H1 (cell line): ENCODE measurements at regions of chr11 and their contacts with region 1.

Region 1: GRCh38 chr11:6812390-6813005 is 13.0 kb upstream of the OR6A2 start:
- DNase-seq: no peak
- H3K4me3 ChIP-seq: no peak overlapping the region
- H3K27ac ChIP-seq: no peak overlapping the region
- H3K4me1 ChIP-seq: no peaks in the 10 kb centered on the region; a peak in 1 of 7 replicates
- H3K27me3 ChIP-seq: no peaks in the 10 kb centered on the region
- CTCF ChIP-seq: peak; percentile 11 to 92 (median 77)
- EP300 ChIP-seq: no peak
- POLR2A ChIP-seq: no peak
- RAD21 ChIP-seq: peak; percentile 70 to 79

Region 2: GRCh38 chr11:6674862-6675261 is 137.6 kb before region 1 on chr11:
- CTCF ChIA-PET with region 1: no interaction called
- POLR2A ChIA-PET with region 1: no interaction called
- DNase-seq: no peak
- H3K4me3 ChIP-seq: no peak overlapping the region
- H3K27ac ChIP-seq: no peak overlapping the region
- H3K4me1 ChIP-seq: no peaks in the 10 kb centered on the region
- H3K27me3 ChIP-seq: no peaks in the 10 kb centered on the region; a peak in 1 of 7 replicates
- CTCF ChIP-seq: no peak
- EP300 ChIP-seq: no peak
- POLR2A ChIP-seq: no peak
- RAD21 ChIP-seq: no peak

Region 3: GRCh38 chr11:6737872-6738466 is 74.5 kb before region 1 on chr11:
- CTCF ChIA-PET with region 1: interaction called, 12 read pairs
- POLR2A ChIA-PET with region 1: no interaction called
- DNase-seq: peak in 1 of 2 experiments; percentile 47
- H3K4me3 ChIP-seq: no peak overlapping the region
- H3K27ac ChIP-seq: no peak overlapping the region
- H3K4me1 ChIP-seq: no peaks in the 10 kb centered on the region
- H3K27me3 ChIP-seq: no peaks in the 10 kb centered on the region
- CTCF ChIP-seq: peak in 2 of 3 experiments; percentile 43 to 62; a peak in 2 of 4 replicates
- EP300 ChIP-seq: no peak
- POLR2A ChIP-seq: no peak
- RAD21 ChIP-seq: peak; percentile 48 to 56

Region 4: DNA sequence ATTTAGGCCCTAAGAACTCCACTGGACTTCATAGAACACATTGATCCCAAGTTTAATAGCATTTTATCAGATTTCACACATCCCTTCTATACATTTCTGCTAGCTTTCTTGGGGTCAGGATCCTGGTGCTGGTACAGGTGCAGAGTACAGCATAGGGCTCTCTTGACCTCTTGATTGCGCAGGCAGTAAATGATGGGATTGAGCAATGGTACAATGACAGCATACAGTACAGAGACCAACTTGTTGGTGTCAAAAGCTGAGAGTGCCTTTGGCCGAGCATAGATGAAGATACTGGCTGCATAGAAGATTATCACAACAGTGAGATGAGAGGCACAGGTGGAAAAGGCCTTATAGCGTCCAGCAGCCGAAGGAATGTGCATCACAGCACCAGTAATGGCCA is 17.9 kb before region 1 on chr11:
- CTCF ChIA-PET with region 1: interaction called, 22 read pairs
- POLR2A ChIA-PET with region 1: no interaction called
- DNase-seq: no peak
- H3K4me3 ChIP-seq: no peak overlapping the region
- H3K27ac ChIP-seq: no peak overlapping the region
- H3K4me1 ChIP-seq: no peaks in the 10 kb centered on the region
- H3K27me3 ChIP-seq: no peaks in the 10 kb centered on the region
- CTCF ChIP-seq: no peak
- EP300 ChIP-seq: no peak
- POLR2A ChIP-seq: no peak
- RAD21 ChIP-seq: no peak

Region 5: GRCh38 chr11:6833356-6833755 is 20.9 kb after region 1 on chr11:
- CTCF ChIA-PET with region 1: interaction called, 11 read pairs
- POLR2A ChIA-PET with region 1: no interaction called
- DNase-seq: no peak
- H3K4me3 ChIP-seq: no peak overlapping the region
- H3K27ac ChIP-seq: no peak overlapping the region
- H3K4me1 ChIP-seq: no peaks in the 10 kb centered on the region
- H3K27me3 ChIP-seq: no peaks in the 10 kb centered on the region
- CTCF ChIP-seq: no peak
- EP300 ChIP-seq: no peak
- POLR2A ChIP-seq: no peak
- RAD21 ChIP-seq: no peak

Region 6: GRCh38 chr11:7020183-7020917 is 207.9 kb after region 1 on chr11 and contains the starts of genes NLRP14 and ZNF214:
- CTCF ChIA-PET with region 1: interaction called, 10 read pairs
- POLR2A ChIA-PET with region 1: interaction called, 3 read pairs
- DNase-seq: peak; percentile 80 to 89
- H3K4me3 ChIP-seq: peak within 1 kb of the TSS; percentile 82 to 99 (median 94)
- H3K27ac ChIP-seq: peak within 1 kb of the TSS; percentile 48
- H3K4me1 ChIP-seq: peaks cover 0 to 3% (median 0%) of the 10 kb centered on the region in 4 experiments; a peak in 1 of 7 replicates
- H3K27me3 ChIP-seq: no peaks in the 10 kb centered on the region; a peak in 1 of 7 replicates
- CTCF ChIP-seq: no peak
- EP300 ChIP-seq: no peak
- POLR2A ChIP-seq: peak; percentile 6 to 37; a peak in 1 of 3 replicates
- RAD21 ChIP-seq: no peak
- total RNA-seq, gene NLRP14: 0.08 TPM in 1 of 2 replicates, not detected in the other
- total RNA-seq, gene ZNF214: 3.2 and 5.0 TPM in 2 replicates